ENCODE measurements at regions of chr12 and their contacts with region 1.

Region 1: DNA sequence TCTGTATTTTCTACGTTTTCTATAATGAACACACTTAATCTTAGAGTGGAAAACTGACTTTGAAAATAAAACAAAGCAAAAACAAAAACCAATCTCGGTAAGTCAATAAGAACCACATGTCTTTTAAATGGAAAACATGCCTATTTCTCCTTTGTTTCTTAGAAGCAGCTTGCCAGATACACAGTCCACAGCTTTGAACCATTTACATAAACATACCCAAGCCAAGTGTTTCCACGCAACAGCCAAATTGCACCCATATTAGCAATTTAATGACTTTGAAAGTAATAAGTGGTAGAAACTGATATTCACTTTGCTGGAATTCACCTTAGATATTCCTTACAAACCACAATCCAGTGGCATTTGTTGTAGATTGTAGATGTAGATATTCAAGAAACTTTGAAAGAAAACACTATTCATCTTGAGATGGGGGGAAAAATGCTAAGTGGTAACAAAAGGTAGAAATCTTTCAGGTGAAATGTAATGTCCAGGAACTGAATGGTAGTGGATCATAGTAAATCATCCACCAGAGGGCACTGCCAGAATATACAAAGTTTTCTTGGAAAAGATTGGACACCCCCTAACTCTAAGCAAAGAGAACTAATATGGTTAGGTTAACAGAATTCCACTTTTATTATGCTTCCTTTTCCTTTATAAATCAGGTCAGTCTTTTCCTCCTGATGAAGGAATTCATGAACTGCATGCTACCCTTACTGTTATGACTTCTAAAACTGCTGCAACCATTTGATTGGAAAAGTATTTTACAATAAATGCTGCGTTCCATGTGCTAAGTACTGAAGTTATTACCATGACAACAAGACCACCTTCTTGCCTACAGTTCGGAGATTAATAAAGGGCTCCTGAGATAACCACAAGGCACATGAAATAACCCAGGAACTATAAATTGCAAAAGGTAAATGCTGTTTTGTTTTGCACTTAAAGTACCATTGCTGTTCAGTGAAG is 69.8 kb downstream of the RERG start:
- DNase-seq: no peak
- ATAC-seq: peak; percentile 59 to 75
- H3K4me3 ChIP-seq: no peak overlapping the region
- H3K27ac ChIP-seq: no peak overlapping the region
- H3K4me1 ChIP-seq: peaks cover 5% of the 10 kb centered on the region
- H3K27me3 ChIP-seq: no peaks in the 10 kb centered on the region

Region 2: GRCh38 chr12:15220994-15221885 is 69.8 kb after region 1 on chr12 and contains the start of gene RERG:
- intact Hi-C with region 1: loop called in 3 of 4 experiments (anchors 2 to 5 kb)
- DNase-seq: peak; percentile 84 to 95 (median 94)
- ATAC-seq: peak; percentile 99 to 100
- H3K4me3 ChIP-seq: peak within 1 kb of the TSS; percentile 60
- H3K27ac ChIP-seq: peak within 1 kb of the TSS; percentile 19
- H3K4me1 ChIP-seq: no peaks in the 10 kb centered on the region
- H3K27me3 ChIP-seq: no peaks in the 10 kb centered on the region
- total RNA-seq, gene RERG: 5.1 to 9.5 (median 8.4) TPM